H1 (cell line): ENCODE measurements at regions of chr11 and their contacts with region 1.

Region 1: GRCh38 chr11:44861849-44862749 is 88.6 kb downstream of the TP53I11 start:
- DNase-seq: peak in 1 of 2 experiments; percentile 85
- H3K4me3 ChIP-seq: no peak overlapping the region; a peak in 2 of 8 replicates
- H3K27ac ChIP-seq: peak overlapping the region; percentile 59; the same call in 1 of the 2 replicates
- H3K4me1 ChIP-seq: peaks cover 33 to 55% (median 40%) of the 10 kb centered on the region in 4 experiments
- H3K27me3 ChIP-seq: no peaks in the 10 kb centered on the region
- CTCF ChIP-seq: no peak
- EP300 ChIP-seq: peak in 1 of 2 experiments; percentile 70; a peak in 1 of 3 replicates
- POLR2A ChIP-seq: peak in 1 of 2 experiments; percentile 37; a peak in 2 of 3 replicates
- RAD21 ChIP-seq: no peak

Region 2: DNA sequence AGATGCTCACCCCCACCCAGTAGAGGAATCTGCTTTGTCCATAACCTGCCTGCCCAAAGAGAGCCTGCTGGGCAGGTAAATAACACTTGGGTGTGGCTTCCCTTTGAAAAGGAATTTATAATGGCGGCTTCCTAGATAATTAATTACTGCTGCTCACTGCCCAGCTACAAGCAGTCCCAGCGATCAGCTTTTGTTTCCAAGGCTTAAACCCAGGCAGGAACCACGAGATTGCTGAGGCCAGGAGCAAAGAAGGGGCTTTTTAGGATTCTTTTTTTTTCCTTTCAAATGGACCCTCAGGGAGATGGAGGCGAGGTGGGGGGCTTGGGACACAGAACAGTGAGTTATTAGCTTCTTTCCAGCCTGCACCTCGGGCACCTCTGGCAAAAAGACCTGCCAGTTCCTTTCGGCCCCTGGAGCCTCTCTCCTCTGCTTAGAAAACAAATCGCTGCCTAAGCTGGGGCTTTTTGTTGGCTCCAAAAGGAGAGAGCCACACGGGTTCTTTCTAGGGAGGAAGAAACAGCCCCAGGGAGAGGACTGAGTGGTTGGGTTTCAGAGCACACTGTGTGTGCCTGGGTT is 28.1 kb before region 1 on chr11:
- CTCF ChIA-PET with region 1: interaction called, 4 read pairs
- POLR2A ChIA-PET with region 1: interaction called, 14 read pairs
- DNase-seq: no peak
- H3K4me3 ChIP-seq: no peak overlapping the region; a peak in 1 of 8 replicates
- H3K27ac ChIP-seq: 0 out of 2 replicates have a peak overlapping the region, but pooled peaks have one; percentile 11
- H3K4me1 ChIP-seq: peaks cover 10 to 19% (median 14%) of the 10 kb centered on the region in 4 experiments; a peak in 6 of 7 replicates
- H3K27me3 ChIP-seq: peaks cover 0 to 16% (median 9%) of the 10 kb centered on the region in 4 experiments; a peak in 4 of 7 replicates
- CTCF ChIP-seq: no peak
- EP300 ChIP-seq: no peak
- POLR2A ChIP-seq: no peak
- RAD21 ChIP-seq: no peak

Region 3: DNA sequence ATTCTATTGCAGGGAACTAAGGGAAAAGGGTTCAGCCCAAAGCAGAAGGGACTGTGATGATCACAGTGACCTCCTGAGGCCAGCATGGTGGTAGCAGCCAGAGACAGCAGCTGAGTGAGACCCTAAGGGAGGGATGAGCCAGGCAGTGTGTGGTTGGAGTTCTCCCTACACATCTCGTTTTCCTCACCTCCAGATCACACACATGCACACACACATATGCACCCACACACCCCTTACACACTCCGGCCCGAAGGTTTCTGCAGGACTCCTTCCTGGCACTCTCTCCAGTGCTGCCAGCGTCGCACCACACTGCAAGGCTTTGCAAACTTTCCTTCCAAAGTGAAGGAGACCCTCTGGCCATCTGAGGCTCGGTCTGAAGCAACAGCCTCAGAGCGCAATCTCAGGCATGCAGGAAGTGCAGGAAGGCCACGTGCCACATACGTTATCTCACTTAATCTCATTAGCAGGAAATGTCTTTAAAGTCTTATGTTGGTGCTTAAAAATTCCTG is 115.4 kb after region 1 on chr11:
- CTCF ChIA-PET with region 1: no interaction called
- POLR2A ChIA-PET with region 1: no interaction called
- DNase-seq: no peak
- H3K4me3 ChIP-seq: no peak overlapping the region
- H3K27ac ChIP-seq: no peak overlapping the region
- H3K4me1 ChIP-seq: peaks cover 0 to 27% (median 18%) of the 10 kb centered on the region in 4 experiments; a peak in 6 of 7 replicates
- H3K27me3 ChIP-seq: no peaks in the 10 kb centered on the region
- CTCF ChIP-seq: peak; percentile 57 to 83 (median 79)
- EP300 ChIP-seq: no peak
- POLR2A ChIP-seq: no peak
- RAD21 ChIP-seq: peak; percentile 48 to 69